ENCODE measurements at regions of chr16 and their contacts with region 1.

Region 1: DNA sequence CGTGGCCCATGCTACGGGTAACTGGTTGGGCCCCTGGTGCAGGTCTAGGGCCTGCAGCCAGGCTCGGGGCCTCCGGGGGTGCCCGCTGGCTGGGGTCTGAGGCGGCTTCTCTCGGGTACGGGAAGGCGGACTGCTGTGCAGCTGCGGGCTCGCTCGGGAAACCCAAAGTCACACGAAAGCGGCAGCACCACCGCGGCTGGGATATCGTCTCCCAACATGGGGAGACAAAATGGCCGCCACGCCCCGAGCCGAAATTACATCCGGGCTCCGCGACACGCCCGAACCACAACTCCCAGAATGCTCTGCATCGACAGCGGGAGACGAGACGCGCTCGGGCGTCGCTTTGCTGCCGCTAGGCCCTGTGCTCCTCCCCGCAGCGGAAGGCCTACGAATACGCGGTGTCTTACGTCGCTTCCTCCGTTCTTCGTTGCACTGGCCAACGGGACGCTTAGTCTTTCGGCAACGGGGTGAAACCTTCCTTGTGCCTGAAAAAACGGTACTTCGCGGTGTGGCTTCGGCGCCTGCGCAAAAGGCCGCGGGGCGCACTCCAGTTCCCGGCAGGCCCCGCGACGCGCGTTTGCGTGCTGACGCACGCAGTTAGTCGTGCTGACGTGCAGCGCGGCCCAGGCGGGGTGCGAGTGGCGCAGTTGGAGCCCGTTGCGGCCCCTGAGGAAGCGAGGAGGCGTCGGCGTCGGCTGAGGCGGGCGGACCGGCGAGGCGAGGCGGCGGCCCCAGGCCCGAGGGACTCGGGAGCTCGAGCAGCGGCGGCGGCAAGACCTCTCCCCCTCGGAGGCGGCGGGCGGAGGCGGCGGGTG is at the start of gene SRRM2:
- DNase-seq: peak; percentile 78 to 96
- H3K4me3 ChIP-seq: peak within 1 kb of the TSS; percentile 75 to 93 (median 88)
- H3K27ac ChIP-seq: peak within 1 kb of the TSS; percentile 99
- H3K4me1 ChIP-seq: peaks cover 2 to 8% (median 5%) of the 10 kb centered on the region in 4 experiments; a peak in 6 of 7 replicates
- H3K27me3 ChIP-seq: no peaks in the 10 kb centered on the region
- CTCF ChIP-seq: no peak
- EP300 ChIP-seq: no peak
- POLR2A ChIP-seq: peak; percentile 85 to 95
- RAD21 ChIP-seq: no peak
- total RNA-seq, gene SRRM2: 563 and 579 TPM in 2 replicates

Region 2: DNA sequence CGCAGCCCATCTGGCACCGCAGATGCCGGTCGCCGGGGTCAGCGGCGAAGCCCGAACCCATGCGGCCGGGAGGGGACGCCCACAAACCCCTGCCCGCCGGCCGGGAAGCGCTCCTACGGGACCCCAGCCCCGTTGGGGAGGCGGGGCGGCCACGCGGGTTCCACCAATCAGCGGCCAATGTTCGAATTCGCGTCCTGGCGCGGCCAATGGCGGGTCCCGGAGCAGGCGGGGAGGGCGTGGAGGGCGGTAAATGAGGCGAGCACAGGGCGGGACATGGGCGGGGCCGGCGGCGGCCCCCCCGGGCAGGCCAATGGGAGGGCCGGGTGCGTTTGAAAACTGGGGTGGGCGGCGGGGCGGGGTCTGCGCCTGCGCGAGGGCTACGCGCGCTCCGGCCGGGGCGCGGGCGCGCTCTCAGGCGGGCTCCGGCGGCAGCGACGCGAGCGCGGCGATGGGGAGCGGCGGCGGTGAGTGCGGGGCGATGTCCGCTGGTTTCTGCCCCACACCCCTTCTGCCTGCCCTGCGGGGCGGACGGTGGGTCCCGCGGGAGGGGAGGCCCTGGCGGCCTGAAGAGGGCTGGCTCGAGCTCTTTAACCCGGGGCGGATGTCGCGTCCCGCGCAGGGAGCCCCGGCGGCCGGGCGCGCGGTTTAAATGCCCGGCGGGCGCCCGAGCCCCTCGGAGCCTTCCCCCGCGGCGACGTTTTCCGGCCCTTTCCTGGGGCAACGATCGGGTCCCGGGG is 323.0 kb before region 1 on chr16 and contains the start of gene CCNF:
- CTCF ChIA-PET with region 1: no interaction called
- POLR2A ChIA-PET with region 1: no interaction called
- DNase-seq: peak; percentile 91 to 99
- H3K4me3 ChIP-seq: peak within 1 kb of the TSS; percentile 75 to 99 (median 83)
- H3K27ac ChIP-seq: peak within 1 kb of the TSS; percentile 43; the same call in 1 of the 2 replicates
- H3K4me1 ChIP-seq: peaks cover 0 to 13% (median 6%) of the 10 kb centered on the region in 4 experiments; a peak in 5 of 7 replicates
- H3K27me3 ChIP-seq: peaks cover 0 to 9% (median 2%) of the 10 kb centered on the region in 4 experiments; a peak in 2 of 7 replicates
- CTCF ChIP-seq: 0 out of 4 replicates have a peak, but pooled peaks of 1 of the 3 experiments have one; percentile 2
- EP300 ChIP-seq: no peak
- POLR2A ChIP-seq: no peak; a peak in 1 of 3 replicates
- RAD21 ChIP-seq: no peak; a peak in 1 of 4 replicates
- total RNA-seq, gene CCNF: 54.3 and 55.9 TPM in 2 replicates

Region 3: DNA sequence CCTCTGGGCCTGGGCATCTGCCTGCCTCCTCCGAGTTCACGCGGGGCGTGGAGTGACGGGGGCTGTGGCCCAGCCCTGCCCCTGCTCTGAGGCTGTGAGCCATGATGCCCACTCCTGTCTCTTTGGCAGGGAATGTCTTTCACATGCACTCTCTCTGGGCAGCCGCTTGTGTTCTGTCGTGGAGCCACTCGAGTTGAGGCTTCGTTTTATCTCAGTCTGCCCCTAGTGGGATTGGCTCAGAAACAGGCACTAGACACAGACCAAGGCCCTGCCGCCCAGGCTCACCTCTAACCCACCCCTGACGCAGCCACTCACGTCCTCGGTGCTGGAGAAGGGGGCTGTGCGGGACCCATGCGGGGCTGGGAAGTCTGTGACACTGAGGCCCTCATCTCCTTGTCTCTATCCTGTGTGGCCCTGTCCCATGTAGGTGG is 137.5 kb before region 1 on chr16:
- CTCF ChIA-PET with region 1: no interaction called
- POLR2A ChIA-PET with region 1: no interaction called
- DNase-seq: no peak
- H3K4me3 ChIP-seq: no peak overlapping the region
- H3K27ac ChIP-seq: no peak overlapping the region
- H3K4me1 ChIP-seq: no peaks in the 10 kb centered on the region
- H3K27me3 ChIP-seq: no peaks in the 10 kb centered on the region
- CTCF ChIP-seq: no peak
- EP300 ChIP-seq: no peak
- POLR2A ChIP-seq: no peak
- RAD21 ChIP-seq: no peak

Region 4: DNA sequence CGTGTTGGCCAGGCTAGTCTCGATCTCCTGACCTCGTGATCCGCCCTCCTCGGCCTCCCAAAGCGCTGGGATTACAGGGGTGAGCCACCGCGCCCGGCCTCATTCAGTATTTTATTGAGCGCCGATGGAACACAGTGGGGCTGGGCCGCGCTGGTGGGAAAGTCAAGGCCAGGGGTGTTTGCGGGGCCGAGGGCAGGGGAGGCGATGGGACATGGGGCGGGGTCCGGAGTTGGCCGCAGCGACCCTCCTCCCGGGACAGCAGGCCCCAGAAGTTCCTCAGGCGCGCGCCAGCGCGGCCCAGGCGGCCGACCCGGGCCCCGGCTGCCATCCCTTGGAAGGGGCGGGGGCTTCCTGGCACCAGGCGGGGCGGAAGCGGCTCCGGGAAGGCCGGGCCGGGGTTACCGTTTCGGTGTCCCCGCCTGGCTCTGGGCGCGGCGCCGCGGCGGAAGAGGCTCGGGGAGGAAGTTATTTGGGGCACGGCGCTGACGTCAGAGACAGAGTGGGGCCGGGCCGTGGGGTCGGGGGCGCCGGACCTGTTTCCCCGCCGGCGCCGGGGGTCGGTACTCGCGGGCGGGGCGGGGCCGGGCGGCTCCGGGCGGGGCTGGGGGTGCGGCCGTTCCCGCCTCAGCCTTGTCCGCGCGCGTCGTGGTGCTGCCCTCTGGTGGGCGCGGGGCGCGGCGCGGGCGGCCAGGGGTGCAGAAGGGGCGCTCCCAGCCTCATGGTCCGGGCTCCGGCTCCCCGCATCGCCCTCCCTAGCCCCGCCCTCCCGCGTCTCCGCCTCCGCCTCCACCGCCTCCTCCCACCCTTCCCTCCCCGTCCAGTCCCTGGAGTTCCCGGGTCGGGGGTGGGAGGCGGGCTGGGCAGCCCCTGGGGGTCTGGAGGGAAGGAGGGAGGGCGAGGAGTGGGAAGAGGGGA is 31.3 kb before region 1 on chr16:
- CTCF ChIA-PET with region 1: no interaction called
- POLR2A ChIA-PET with region 1: interaction called, 11 read pairs
- DNase-seq: peak; percentile 74 to 90
- H3K4me3 ChIP-seq: peak overlapping the region; percentile 43 to 65 (median 54)
- H3K27ac ChIP-seq: no peak overlapping the region; the same call in 1 of the 2 replicates
- H3K4me1 ChIP-seq: peaks cover 0 to 10% (median 3%) of the 10 kb centered on the region in 4 experiments; a peak in 2 of 7 replicates
- H3K27me3 ChIP-seq: no peaks in the 10 kb centered on the region
- CTCF ChIP-seq: peak; percentile 40 to 77 (median 64)
- EP300 ChIP-seq: peak in 1 of 2 experiments; percentile 85; a peak in 1 of 3 replicates
- POLR2A ChIP-seq: peak in 1 of 2 experiments; percentile 62; a peak in 2 of 3 replicates
- RAD21 ChIP-seq: peak; percentile 7 to 33; a peak in 2 of 4 replicates

Region 5: DNA sequence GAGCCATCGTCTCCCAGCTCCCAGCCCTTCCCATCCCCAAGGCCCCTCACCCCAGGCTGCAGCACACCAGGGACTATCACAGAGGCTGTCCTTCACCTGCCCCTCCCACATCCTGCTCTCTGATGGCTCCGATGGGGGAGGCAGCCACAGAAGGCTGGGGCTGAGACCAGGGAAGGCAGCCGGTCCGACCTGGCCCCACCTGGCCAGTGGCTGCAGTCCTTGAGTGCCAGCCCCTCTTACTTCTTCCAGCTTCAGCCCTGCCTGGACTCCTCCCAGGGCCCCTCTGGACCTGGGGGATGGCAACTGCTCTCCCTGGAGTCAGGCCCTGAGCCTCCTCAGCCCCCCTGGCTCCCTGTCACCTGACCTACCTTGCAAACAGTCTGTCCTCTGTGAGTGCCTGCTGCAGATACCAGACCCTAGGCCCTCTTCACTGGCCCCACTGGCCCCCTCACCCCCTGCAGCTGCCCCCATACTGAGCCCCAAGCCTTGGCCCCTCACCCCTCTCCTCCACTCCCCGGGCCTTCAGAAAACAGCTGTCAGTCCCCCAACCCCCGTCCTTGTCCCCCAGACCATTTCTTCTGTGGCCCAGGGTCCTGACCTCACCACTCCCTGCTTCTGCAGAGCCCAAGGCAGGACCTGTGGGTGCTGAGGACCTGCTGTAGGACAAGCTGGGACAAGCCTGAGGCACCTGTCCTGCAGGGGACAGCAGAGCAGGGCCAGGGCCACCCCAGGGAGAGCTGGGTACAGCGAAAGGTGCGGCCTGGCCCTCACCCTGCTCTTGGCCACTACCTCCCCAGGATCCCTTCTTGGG is 12.4 kb before region 1 on chr16:
- CTCF ChIA-PET with region 1: interaction called, 4 read pairs
- POLR2A ChIA-PET with region 1: interaction called, 96 read pairs
- DNase-seq: no peak
- H3K4me3 ChIP-seq: no peak overlapping the region
- H3K27ac ChIP-seq: no peak overlapping the region
- H3K4me1 ChIP-seq: peaks cover 0 to 3% (median 0%) of the 10 kb centered on the region in 4 experiments; a peak in 4 of 7 replicates
- H3K27me3 ChIP-seq: no peaks in the 10 kb centered on the region
- CTCF ChIP-seq: no peak
- EP300 ChIP-seq: no peak
- POLR2A ChIP-seq: no peak
- RAD21 ChIP-seq: no peak

Region 6: DNA sequence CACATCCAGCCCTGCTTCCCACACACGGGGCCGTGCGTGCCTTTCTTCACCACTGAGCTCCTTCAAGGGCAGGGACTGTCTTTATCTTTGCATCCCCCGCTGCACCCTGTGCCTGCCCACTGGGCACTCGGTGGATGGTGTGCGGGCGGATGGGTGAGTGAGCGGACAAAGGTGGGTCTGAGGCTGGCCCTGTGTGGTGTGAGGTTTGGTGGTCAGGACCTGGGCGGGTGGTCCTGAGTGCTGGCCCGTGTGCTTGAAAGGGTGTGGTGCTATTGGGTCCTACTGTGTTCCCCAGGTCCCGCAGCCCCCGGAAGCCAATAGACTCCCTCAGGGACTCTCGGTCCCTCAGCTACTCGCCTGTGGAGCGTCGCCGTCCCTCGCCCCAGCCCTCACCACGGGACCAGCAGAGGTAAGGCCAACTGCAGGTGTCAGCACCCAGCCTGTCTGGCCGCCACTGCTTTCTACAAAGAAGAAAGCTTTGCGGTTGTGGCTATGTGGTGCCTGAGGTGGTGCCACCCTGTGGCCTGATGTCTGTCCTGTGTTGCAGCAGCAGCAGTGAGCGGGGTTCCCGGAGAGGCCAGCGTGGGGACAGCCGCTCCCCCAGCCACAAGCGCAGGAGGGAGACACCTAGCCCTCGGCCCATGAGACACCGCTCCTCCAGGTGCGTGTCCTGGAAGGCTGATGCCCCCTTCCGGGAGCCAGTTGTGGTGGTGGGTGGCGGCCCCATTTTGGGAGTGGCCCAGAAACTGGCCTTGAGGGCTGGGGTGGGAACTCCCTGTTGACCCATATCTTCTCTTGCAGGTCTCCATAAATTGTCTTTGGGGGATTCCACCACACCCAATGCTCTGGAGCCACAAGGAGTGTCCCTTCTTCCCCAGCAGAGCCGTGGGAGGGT is 18.1 kb after region 1 on chr16:
- CTCF ChIA-PET with region 1: interaction called, 5 read pairs
- POLR2A ChIA-PET with region 1: interaction called, 180 read pairs
- DNase-seq: no peak
- H3K4me3 ChIP-seq: no peak overlapping the region
- H3K27ac ChIP-seq: 0 out of 2 replicates have a peak overlapping the region, but pooled peaks have one; percentile 16
- H3K4me1 ChIP-seq: peaks cover 0 to 3% (median under 1%) of the 10 kb centered on the region in 4 experiments; a peak in 3 of 7 replicates
- H3K27me3 ChIP-seq: no peaks in the 10 kb centered on the region
- CTCF ChIP-seq: peak; percentile 15 to 34 (median 22)
- EP300 ChIP-seq: no peak
- POLR2A ChIP-seq: peak in 1 of 2 experiments; percentile 66; a peak in 2 of 3 replicates
- RAD21 ChIP-seq: no peak; a peak in 1 of 4 replicates

Region 7: DNA sequence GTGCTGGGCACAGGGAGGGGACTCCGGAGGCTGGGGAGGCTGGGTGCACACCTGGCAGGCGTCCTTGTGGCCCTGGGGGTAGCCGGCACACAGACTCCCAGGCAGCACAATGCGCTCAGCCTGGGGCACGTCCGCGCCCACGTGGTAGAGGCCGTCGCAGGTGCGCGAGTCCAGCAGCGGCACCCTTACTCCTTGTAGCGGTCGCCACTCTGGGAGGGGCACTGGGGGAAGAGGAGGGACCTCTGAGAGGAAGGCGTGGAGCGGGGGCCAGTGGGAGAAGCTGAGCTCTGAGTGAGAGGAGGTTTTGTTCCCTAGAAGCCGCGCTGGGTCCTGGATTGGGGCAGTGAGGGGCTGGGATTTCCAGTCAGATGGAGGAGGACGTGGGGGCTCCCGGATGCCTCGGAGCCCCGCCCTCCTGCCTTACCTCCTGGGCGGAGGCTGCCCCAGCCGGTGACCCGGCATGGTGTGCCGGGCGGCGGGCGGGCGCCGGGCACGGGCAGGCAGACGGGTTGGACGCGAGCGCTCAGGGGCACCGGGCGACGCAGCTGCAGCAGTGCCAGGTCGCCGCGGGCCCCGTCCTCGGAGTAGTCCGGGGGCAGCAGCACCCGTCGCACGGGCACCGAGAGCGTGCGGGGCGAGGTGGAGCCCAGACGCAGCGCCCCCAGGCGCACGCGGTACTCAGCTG is 32.9 kb after region 1 on chr16:
- CTCF ChIA-PET with region 1: no interaction called
- POLR2A ChIA-PET with region 1: interaction called, 180 read pairs
- DNase-seq: no peak
- H3K4me3 ChIP-seq: no peak overlapping the region; a peak in 1 of 8 replicates
- H3K27ac ChIP-seq: no peak overlapping the region
- H3K4me1 ChIP-seq: peaks cover 0 to 3% (median 2%) of the 10 kb centered on the region in 4 experiments; a peak in 1 of 7 replicates
- H3K27me3 ChIP-seq: peaks cover 0 to 3% (median 0%) of the 10 kb centered on the region in 4 experiments; a peak in 2 of 7 replicates
- CTCF ChIP-seq: no peak
- EP300 ChIP-seq: no peak
- POLR2A ChIP-seq: no peak
- RAD21 ChIP-seq: no peak

Region 8: DNA sequence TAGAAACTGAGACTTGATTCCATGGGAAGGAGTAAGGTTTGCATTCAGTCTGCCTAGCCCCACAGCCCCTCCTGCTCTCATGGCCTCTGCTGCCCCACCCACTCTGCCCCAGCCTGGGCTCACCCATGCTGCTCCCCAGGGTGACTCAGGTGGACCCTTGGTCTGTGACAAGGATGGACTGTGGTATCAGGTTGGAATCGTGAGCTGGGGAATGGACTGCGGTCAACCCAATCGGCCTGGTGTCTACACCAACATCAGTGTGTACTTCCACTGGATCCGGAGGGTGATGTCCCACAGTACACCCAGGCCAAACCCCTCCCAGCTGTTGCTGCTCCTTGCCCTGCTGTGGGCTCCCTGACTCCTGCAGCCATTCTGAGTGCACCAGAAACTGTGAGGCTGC is 52.5 kb after region 1 on chr16:
- CTCF ChIA-PET with region 1: no interaction called
- POLR2A ChIA-PET with region 1: no interaction called
- DNase-seq: no peak
- H3K4me3 ChIP-seq: no peak overlapping the region
- H3K27ac ChIP-seq: no peak overlapping the region
- H3K4me1 ChIP-seq: no peaks in the 10 kb centered on the region
- H3K27me3 ChIP-seq: no peaks in the 10 kb centered on the region; a peak in 1 of 7 replicates
- CTCF ChIP-seq: no peak
- EP300 ChIP-seq: no peak
- POLR2A ChIP-seq: no peak
- RAD21 ChIP-seq: no peak